Activated CD4-positive, alpha-beta T cell treated with anti-CD3 and anti-CD28 coated beads for 36 hours (primary cell): ENCODE measurements at regions of chr7 and their contacts with region 1.

Region 1: DNA sequence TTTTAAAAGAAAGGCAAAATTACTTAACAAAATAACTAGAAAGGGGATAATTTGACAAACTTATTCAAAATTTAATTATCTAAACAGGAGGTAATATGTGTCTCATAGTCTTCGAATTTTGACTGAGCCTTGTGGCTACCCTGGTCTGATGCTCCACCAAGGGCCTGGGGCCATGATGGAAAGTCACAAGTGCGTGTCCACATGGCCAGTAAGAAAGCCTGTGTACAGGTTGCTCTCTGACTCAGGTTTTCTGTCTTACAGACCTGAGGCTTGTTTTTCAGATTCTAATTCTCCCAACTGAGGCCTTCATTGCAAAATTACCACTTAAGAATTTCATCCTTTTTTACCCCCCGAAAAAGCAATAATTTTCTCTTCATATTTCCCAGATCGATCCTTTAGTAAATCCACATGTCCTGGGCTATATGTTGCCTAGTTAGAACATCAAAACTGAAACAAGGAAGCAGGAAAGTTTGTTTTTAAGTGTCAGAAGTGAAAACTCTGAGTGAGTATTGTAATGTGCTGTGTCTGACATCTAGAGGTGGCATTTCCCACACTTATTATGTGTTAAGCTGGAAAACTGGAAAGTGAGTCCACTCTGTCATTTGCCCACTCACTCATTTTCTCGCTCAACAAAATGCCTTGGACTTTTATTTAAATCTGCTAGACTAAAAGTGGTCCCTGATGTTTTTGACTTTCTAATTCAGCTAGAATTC is 10.0 kb downstream of the CYP3A43 start:
- DNase-seq: peak; percentile 19
- ATAC-seq: peak; percentile 69
- H3K4me3 Mint-ChIP-seq: no peak overlapping the region
- H3K27ac Mint-ChIP-seq: peak overlapping the region; percentile 53
- H3K4me1 Mint-ChIP-seq: peaks cover 10% of the 10 kb centered on the region
- H3K27me3 Mint-ChIP-seq: no peaks in the 10 kb centered on the region

Region 2: GRCh38 chr7:99525713-99526440 is 311.9 kb before region 1 on chr7:
- CTCF ChIA-PET with region 1: interaction called, 6 read pairs
- POLR2A ChIA-PET with region 1: no interaction called
- intact Hi-C with region 1: loop called in 1 of 2 experiments (anchors 2 kb)
- DNase-seq: peak; percentile 59
- ATAC-seq: peak; percentile 64
- H3K4me3 Mint-ChIP-seq: no peak overlapping the region
- H3K27ac Mint-ChIP-seq: no peak overlapping the region
- H3K4me1 Mint-ChIP-seq: no peaks in the 10 kb centered on the region
- H3K27me3 Mint-ChIP-seq: no peaks in the 10 kb centered on the region

Region 3: GRCh38 chr7:99616359-99617191 is 221.2 kb before region 1 on chr7 and contains the start of gene ZSCAN25:
- CTCF ChIA-PET with region 1: no interaction called
- POLR2A ChIA-PET with region 1: no interaction called
- intact Hi-C with region 1: loop called in 1 of 2 experiments (anchors 5 kb)
- DNase-seq: peak; percentile 92
- ATAC-seq: peak; percentile 93
- H3K4me3 Mint-ChIP-seq: peak within 1 kb of the TSS; percentile 92
- H3K27ac Mint-ChIP-seq: peak within 1 kb of the TSS; percentile 96
- H3K4me1 Mint-ChIP-seq: peaks cover 44% of the 10 kb centered on the region
- H3K27me3 Mint-ChIP-seq: no peaks in the 10 kb centered on the region
- total RNA-seq, gene ZSCAN25: 20.5 to 25.2 TPM

Region 4: GRCh38 chr7:99631295-99632109 is 206.3 kb before region 1 on chr7:
- CTCF ChIA-PET with region 1: no interaction called
- POLR2A ChIA-PET with region 1: no interaction called
- intact Hi-C with region 1: loop called in 1 of 2 experiments (anchors 10 kb)
- DNase-seq: peak; percentile 63
- ATAC-seq: peak; percentile 88
- H3K4me3 Mint-ChIP-seq: no peak overlapping the region
- H3K27ac Mint-ChIP-seq: peak overlapping the region; percentile 88
- H3K4me1 Mint-ChIP-seq: peaks cover 48% of the 10 kb centered on the region
- H3K27me3 Mint-ChIP-seq: no peaks in the 10 kb centered on the region